Activated CD4-positive, alpha-beta T cell treated with anti-CD3 and anti-CD28 coated beads for 36 hours (primary cell): ENCODE measurements at regions of chr18 and their contacts with region 1.

Region 1: DNA sequence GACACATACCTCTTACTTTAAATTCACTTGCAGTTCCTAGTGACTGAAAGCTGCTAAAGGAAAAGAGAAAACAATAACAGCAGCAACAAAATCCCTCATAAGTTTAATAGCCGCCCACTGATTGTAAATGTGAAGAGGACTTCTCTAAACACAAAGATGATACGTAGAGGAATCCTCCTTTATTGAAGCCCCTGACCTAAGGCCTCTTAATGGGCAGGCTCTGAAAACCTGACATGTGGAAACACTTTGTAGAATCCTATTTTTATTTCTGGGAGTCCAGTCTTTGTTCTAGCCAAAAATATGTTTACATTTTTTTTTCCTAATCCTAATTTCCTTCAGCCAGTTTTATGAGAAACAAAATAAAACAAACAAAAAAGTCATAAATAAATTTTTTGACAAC is 1277.7 kb upstream of the CELF4 start:
- DNase-seq: no peak
- ATAC-seq: no peak
- H3K4me3 Mint-ChIP-seq: no peak overlapping the region
- H3K27ac Mint-ChIP-seq: no peak overlapping the region
- H3K4me1 Mint-ChIP-seq: no peaks in the 10 kb centered on the region
- H3K27me3 Mint-ChIP-seq: no peaks in the 10 kb centered on the region

Region 2: DNA sequence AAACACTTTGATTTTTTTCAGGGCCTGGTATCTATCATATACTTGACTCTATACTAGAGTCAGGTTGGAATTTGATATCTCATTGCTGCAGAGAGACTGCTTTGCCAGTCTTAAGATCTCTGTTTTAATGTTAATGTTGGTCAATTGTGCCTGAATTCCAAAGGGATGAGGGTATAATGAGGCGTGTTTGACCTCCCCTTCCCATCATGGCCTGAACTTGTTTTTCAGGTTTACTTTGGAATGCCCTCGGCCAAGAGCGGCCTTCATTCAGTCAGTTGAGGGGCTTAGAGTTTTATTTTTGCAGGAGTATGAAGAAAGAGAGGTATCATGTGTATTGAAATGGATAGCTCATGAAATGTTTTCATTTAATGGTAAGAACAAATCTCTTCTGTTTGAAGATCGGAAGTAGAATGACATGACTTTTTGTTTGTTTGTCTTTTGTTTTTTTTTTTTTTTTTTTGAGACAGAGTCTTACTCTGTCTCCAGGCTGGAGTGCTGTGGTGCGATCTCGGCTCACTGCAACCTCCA is 1895.4 kb before region 1 on chr18:
- CTCF ChIA-PET with region 1: no interaction called
- POLR2A ChIA-PET with region 1: no interaction called
- intact Hi-C with region 1: no loop called
- DNase-seq: no peak
- ATAC-seq: no peak
- H3K4me3 Mint-ChIP-seq: no peak overlapping the region
- H3K27ac Mint-ChIP-seq: no peak overlapping the region
- H3K4me1 Mint-ChIP-seq: no peaks in the 10 kb centered on the region
- H3K27me3 Mint-ChIP-seq: no peaks in the 10 kb centered on the region

Region 3: DNA sequence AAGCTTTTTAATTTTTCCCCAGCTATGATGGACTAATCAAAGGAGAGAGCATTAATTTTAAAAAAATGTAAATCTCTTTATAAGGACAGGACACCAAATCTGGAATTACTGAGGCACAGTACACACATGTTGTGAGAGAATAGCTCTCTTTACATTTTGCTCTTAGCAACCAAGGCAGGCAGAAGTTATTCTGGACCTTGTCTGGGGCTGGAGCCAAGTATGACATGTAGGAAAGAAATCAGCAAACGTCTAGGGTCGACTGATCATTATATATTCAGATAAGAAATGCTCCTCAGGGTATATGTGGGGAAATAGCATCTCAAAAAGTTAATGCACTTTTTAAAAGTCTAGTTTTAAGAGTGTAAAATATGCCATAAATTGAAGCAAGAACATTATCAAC is 52.3 kb after region 1 on chr18:
- CTCF ChIA-PET with region 1: no interaction called
- POLR2A ChIA-PET with region 1: no interaction called
- intact Hi-C with region 1: loop called in 1 of 2 experiments (anchors 5 kb)
- DNase-seq: no peak
- ATAC-seq: no peak
- H3K4me3 Mint-ChIP-seq: no peak overlapping the region
- H3K27ac Mint-ChIP-seq: no peak overlapping the region
- H3K4me1 Mint-ChIP-seq: no peaks in the 10 kb centered on the region
- H3K27me3 Mint-ChIP-seq: peaks cover 2% of the 10 kb centered on the region